ENCODE measurements at regions of chr2 and their contacts with region 1.

Region 1: GRCh38 chr2:207540431-207540830 is 10.7 kb downstream of the CREB1 start:
- DNase-seq: no peak
- H3K4me3 ChIP-seq: no peak overlapping the region
- H3K27ac ChIP-seq: no peak overlapping the region
- H3K4me1 ChIP-seq: peaks cover 0 to 5% (median 0%) of the 10 kb centered on the region in 4 experiments; a peak in 2 of 7 replicates
- H3K27me3 ChIP-seq: no peaks in the 10 kb centered on the region
- CTCF ChIP-seq: no peak
- EP300 ChIP-seq: no peak
- POLR2A ChIP-seq: no peak
- RAD21 ChIP-seq: no peak

Region 2: DNA sequence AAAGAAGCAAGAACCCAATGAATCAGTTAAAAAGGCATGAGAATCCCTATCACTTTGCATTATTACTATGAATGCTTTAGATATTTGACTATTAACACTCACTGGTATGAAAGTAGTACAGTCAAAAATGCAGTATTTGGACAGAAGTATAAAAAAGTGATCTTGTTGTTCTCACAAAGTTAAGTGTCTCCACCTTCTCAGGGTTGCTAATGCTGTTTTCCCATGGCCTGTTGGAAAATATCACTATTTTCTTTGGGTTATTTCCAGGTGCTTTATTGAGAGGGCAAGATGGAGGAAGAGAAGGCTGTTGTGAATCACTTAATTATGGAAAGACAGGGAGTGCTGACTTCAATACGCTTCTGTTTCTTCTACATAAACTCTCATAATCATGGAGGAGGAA is 24.2 kb before region 1 on chr2:
- CTCF ChIA-PET with region 1: no interaction called
- POLR2A ChIA-PET with region 1: no interaction called
- DNase-seq: no peak
- H3K4me3 ChIP-seq: no peak overlapping the region
- H3K27ac ChIP-seq: no peak overlapping the region
- H3K4me1 ChIP-seq: no peaks in the 10 kb centered on the region
- H3K27me3 ChIP-seq: peaks cover 0 to 1% (median 0%) of the 10 kb centered on the region in 4 experiments; a peak in 1 of 7 replicates
- CTCF ChIP-seq: no peak
- EP300 ChIP-seq: no peak
- POLR2A ChIP-seq: no peak
- RAD21 ChIP-seq: no peak

Region 3: DNA sequence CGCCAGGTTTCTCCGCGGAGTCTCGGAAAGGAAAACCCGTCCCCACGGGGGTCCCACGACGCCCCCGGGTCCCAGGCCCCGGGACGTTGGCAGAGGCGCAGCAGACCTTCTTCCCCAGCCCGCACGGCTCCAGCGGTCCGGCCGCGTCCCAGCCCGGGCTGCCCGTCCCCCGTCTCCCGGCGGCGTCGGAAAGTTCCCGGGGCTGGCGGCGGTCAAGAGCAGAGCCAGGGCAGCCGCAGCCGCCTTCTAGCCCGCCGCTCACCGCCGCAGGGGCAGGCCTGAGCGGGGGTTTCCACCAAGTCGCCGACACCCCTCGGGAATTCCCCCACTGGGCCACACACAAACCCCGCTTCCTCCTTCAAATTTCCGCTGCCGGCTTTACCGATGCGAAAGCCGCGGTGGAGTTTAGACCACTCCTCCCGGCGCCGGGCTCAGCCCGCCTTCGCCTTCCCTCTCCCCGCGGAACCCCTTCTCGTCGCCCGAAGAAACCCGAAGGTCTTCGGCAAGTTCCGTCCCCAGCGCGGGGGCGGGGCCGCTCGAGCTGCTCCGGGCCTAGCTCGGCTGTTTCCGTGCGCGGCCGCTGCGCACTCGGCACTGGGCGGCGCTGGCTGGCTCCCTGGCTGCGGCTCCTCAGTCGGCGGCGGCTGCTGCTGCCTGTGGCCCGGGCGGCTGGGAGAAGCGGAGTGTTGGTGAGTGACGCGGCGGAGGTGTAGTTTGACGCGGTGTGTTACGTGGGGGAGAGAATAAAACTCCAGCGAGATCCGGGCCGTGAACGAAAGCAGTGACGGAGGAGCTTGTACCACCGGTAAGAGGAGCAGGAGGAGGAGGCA is 10.9 kb before region 1 on chr2 and contains the start of gene CREB1:
- CTCF ChIA-PET with region 1: interaction called, 4 read pairs
- POLR2A ChIA-PET with region 1: interaction called, 51 read pairs
- DNase-seq: peak; percentile 91 to 100
- H3K4me3 ChIP-seq: peak within 1 kb of the TSS; percentile 71 to 98 (median 98)
- H3K27ac ChIP-seq: peak within 1 kb of the TSS; percentile 98
- H3K4me1 ChIP-seq: peaks cover 0 to 5% (median 2%) of the 10 kb centered on the region in 4 experiments; a peak in 4 of 7 replicates
- H3K27me3 ChIP-seq: peaks cover 0 to 7% (median 5%) of the 10 kb centered on the region in 4 experiments; a peak in 4 of 7 replicates
- CTCF ChIP-seq: peak in 1 of 3 experiments; percentile 9; a peak in 1 of 4 replicates
- EP300 ChIP-seq: no peak
- POLR2A ChIP-seq: peak; percentile 77 to 96; a peak in 2 of 3 replicates
- RAD21 ChIP-seq: 0 out of 4 replicates have a peak, but pooled peaks of 1 of the 2 experiments have one; percentile 0
- total RNA-seq, gene CREB1: 97.4 and 99.0 TPM in 2 replicates

Measured in H1 (cell line).